Activated B cell treated with CpG ODN at 0.5 μM for 24 hours (primary cell): ENCODE measurements at regions of chr17 and their contacts with region 1.

Region 1: DNA sequence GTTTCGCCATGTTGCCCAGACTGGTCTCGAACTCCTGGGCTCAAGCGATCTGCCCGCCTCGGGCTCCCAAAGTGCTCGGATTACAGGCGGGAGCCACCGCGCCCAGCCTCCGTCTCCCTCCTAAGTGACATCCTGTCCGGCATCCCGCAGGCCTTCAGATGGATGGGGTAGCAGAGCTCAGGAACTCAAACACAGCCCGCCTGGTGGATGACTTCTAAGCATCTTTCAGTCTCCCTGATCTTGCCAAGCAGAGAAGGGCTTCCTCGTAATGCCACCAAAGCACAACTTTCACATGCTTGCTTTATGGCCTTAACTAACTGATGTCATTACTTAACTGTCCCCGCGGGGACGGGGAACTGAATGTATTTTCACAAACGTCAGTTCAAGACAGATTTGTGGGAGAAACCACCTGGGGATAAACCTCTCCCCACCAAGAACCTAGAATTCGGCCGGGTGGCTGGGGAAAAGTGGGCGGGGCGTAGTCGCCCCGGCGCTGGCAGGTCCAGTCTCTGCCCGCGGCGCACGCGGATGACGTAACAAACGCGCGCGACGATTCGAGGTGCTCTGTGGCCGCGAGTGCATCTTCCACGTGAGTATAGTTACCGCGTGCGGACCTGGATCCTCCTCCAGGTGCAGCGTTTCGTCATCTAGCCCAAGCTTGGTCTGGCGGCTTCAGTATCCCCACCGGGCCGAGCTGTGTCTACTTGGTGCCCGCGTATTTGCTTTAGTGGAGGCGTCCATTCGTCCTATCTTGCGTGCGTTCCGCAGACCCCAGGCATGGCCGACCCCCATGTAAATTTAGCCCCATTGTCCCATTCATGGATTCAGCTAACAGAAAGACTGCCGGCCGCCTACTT is at the start of gene PFAS:
- DNase-seq: peak; percentile 99
- ATAC-seq: peak; percentile 47
- H3K4me3 Mint-ChIP-seq: peak within 1 kb of the TSS; percentile 99
- H3K27ac Mint-ChIP-seq: peak within 1 kb of the TSS; percentile 99
- H3K4me1 Mint-ChIP-seq: peaks cover 43% of the 10 kb centered on the region
- H3K27me3 Mint-ChIP-seq: no peaks in the 10 kb centered on the region
- CTCF ChIP-seq: no peak
- total RNA-seq, gene PFAS: 121 and 126 TPM in 2 replicates

Region 2: GRCh38 chr17:7903154-7904103 is 345.6 kb before region 1 on chr17:
- CTCF ChIA-PET with region 1: no interaction called
- POLR2A ChIA-PET with region 1: no interaction called
- intact Hi-C with region 1: no loop called
- DNase-seq: no peak
- ATAC-seq: no peak
- H3K4me3 Mint-ChIP-seq: no peak overlapping the region
- H3K27ac Mint-ChIP-seq: no peak overlapping the region
- H3K4me1 Mint-ChIP-seq: no peaks in the 10 kb centered on the region
- H3K27me3 Mint-ChIP-seq: no peaks in the 10 kb centered on the region
- CTCF ChIP-seq: no peak

Region 3: GRCh38 chr17:8138672-8139371 is 110.2 kb before region 1 on chr17:
- CTCF ChIA-PET with region 1: interaction called, 3 read pairs
- POLR2A ChIA-PET with region 1: interaction called, 15 read pairs
- intact Hi-C with region 1: loop called (anchors 1 kb)
- DNase-seq: peak; percentile 94
- ATAC-seq: peak; percentile 94
- H3K4me3 Mint-ChIP-seq: no peak overlapping the region
- H3K27ac Mint-ChIP-seq: no peak overlapping the region
- H3K4me1 Mint-ChIP-seq: no peaks in the 10 kb centered on the region
- H3K27me3 Mint-ChIP-seq: no peaks in the 10 kb centered on the region
- CTCF ChIP-seq: peak; percentile 93

Region 4: GRCh38 chr17:8162233-8162996 is 86.6 kb before region 1 on chr17 and contains the start of gene VAMP2:
- CTCF ChIA-PET with region 1: interaction called, 4 read pairs
- POLR2A ChIA-PET with region 1: interaction called, 46 read pairs
- intact Hi-C with region 1: no loop called
- DNase-seq: peak; percentile 91
- ATAC-seq: peak; percentile 71
- H3K4me3 Mint-ChIP-seq: peak within 1 kb of the TSS; percentile 91
- H3K27ac Mint-ChIP-seq: peak within 1 kb of the TSS; percentile 95
- H3K4me1 Mint-ChIP-seq: peaks cover 56% of the 10 kb centered on the region
- H3K27me3 Mint-ChIP-seq: no peaks in the 10 kb centered on the region
- CTCF ChIP-seq: no peak
- total RNA-seq, gene VAMP2: 82.0 and 97.7 TPM in 2 replicates

Region 5: GRCh38 chr17:8204761-8205555 is 44.0 kb before region 1 on chr17:
- CTCF ChIA-PET with region 1: no interaction called
- POLR2A ChIA-PET with region 1: interaction called, 11 read pairs
- intact Hi-C with region 1: no loop called
- DNase-seq: no peak
- ATAC-seq: no peak
- H3K4me3 Mint-ChIP-seq: no peak overlapping the region
- H3K27ac Mint-ChIP-seq: no peak overlapping the region
- H3K4me1 Mint-ChIP-seq: peaks cover 8% of the 10 kb centered on the region
- H3K27me3 Mint-ChIP-seq: no peaks in the 10 kb centered on the region
- CTCF ChIP-seq: no peak

Region 6: DNA sequence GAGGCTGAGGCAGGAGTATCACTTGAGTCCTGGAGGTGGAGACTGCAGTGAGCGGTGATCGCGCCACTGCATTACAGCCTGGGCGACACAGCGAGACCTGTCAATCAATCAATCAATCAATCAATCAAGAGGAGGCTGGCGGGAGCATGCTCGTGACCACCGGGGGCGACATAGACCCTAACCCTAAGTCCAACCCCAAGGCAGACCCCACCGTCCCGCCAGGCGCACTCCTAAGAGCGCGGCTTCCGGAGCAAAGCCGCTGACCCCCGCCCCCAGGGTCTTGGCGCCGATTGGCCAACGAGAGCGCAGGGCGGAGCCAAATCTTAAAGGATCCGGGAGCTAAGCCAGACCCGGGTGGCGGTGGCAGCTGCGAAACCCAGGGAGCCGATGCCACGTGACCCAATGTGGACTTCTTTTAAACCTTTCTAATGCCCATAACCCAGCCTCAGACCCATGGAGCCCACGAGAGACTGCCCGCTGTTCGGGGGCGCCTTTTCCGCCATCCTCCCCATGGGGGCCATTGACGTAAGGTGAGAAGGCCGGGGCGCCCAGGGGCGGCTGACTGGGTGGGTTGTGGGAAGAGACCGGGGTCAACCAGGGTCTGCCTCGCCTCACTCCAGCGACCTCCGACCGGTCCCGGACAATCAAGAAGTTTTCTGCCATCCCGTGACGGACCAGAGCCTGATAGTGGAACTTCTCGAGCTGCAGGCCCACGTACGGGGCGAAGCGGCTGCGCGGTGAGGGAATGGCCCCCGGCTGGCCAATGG is 39.5 kb after region 1 on chr17 and contains the start of gene RANGRF:
- CTCF ChIA-PET with region 1: interaction called, 4 read pairs
- POLR2A ChIA-PET with region 1: interaction called, 108 read pairs
- intact Hi-C with region 1: loop called (anchors 1 kb)
- DNase-seq: peak; percentile 77
- ATAC-seq: peak; percentile 93
- H3K4me3 Mint-ChIP-seq: peak within 1 kb of the TSS; percentile 98
- H3K27ac Mint-ChIP-seq: peak within 1 kb of the TSS; percentile 97
- H3K4me1 Mint-ChIP-seq: peaks cover 51% of the 10 kb centered on the region
- H3K27me3 Mint-ChIP-seq: no peaks in the 10 kb centered on the region
- CTCF ChIP-seq: no peak
- total RNA-seq, gene RANGRF: 50.1 and 50.9 TPM in 2 replicates

Region 7: DNA sequence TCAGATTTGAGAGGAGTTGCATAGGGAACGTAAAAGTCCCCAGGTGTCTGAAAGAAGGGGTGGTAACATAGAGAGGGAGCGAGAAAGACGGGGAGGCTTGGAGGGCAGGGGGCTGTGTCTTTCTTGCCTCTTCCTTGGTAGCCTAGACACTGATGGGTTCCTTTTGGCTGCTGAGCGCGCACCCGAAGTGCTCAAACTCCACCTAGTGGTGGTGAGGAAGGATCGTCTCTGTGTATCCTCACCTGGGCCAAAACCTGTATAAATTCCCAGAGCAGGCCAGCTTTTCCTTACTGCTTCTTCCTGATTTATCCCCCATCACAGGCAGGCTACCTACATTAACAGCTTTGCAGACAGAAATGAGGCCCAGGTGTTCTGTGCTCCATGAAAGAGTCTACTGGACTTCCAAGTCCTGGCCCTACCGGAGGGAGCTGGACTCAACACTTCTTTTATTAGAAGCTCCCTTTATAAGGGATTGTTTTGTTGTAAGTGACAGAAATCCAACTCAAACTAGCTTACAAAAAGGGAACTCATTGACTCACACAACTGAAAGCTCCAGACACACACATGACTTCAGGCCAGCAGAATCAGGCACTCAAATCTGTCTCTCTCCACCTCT is 51.8 kb after region 1 on chr17:
- CTCF ChIA-PET with region 1: interaction called, 8 read pairs
- POLR2A ChIA-PET with region 1: interaction called, 108 read pairs
- intact Hi-C with region 1: loop called (anchors 1 kb)
- DNase-seq: peak; percentile 30
- ATAC-seq: peak; percentile 97
- H3K4me3 Mint-ChIP-seq: no peak overlapping the region
- H3K27ac Mint-ChIP-seq: peak overlapping the region; percentile 46
- H3K4me1 Mint-ChIP-seq: peaks cover 8% of the 10 kb centered on the region
- H3K27me3 Mint-ChIP-seq: no peaks in the 10 kb centered on the region
- CTCF ChIP-seq: no peak

Region 8: DNA sequence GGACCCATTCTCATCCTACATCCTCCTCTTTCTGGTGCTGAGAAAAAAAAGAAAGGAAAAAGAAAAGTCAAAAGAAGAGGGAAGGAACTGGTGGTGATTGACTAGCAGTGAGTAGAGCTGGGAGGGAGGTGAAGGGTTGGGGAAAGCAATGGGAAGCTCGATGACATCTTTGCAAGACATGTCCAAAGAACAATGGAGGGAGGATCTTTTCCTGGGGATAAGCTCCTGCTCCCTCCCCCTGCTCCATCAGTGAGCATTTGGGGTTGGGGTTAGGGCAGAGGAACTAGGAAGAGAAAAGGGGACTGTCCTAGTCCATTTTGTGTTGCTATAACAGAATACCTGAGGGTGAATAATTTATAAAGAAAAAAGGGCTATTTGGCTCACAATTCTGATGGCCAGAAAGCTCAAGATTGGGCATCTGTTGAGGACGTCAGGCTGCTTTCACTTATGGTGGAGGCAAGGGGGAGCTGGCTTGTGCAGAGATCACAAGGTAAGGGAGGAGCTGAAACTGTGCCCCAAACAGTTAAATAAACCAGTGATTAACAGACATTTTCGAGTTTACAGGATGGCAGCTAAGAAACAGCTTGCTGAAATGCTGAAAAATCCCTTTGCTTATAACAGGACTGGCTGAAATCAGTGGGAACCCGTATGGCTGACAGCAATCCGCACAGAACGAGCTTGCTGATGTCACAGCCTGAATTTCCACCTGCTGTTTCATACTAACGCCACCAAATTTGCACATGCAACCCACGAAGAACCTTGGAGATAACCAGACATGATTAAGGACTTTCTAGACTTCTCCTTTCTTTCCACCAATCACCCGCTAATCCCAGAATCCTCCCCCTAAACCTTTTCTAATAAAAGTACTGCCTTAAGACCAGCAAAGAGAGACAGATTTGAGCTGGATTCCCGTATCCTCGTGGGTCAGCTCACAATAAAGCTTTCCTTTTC is 89.1 kb after region 1 on chr17:
- CTCF ChIA-PET with region 1: no interaction called
- POLR2A ChIA-PET with region 1: no interaction called
- intact Hi-C with region 1: no loop called
- DNase-seq: no peak
- ATAC-seq: no peak
- H3K4me3 Mint-ChIP-seq: no peak overlapping the region
- H3K27ac Mint-ChIP-seq: no peak overlapping the region
- H3K4me1 Mint-ChIP-seq: peaks cover 8% of the 10 kb centered on the region
- H3K27me3 Mint-ChIP-seq: peaks cover 3% of the 10 kb centered on the region
- CTCF ChIP-seq: no peak

Region 9: DNA sequence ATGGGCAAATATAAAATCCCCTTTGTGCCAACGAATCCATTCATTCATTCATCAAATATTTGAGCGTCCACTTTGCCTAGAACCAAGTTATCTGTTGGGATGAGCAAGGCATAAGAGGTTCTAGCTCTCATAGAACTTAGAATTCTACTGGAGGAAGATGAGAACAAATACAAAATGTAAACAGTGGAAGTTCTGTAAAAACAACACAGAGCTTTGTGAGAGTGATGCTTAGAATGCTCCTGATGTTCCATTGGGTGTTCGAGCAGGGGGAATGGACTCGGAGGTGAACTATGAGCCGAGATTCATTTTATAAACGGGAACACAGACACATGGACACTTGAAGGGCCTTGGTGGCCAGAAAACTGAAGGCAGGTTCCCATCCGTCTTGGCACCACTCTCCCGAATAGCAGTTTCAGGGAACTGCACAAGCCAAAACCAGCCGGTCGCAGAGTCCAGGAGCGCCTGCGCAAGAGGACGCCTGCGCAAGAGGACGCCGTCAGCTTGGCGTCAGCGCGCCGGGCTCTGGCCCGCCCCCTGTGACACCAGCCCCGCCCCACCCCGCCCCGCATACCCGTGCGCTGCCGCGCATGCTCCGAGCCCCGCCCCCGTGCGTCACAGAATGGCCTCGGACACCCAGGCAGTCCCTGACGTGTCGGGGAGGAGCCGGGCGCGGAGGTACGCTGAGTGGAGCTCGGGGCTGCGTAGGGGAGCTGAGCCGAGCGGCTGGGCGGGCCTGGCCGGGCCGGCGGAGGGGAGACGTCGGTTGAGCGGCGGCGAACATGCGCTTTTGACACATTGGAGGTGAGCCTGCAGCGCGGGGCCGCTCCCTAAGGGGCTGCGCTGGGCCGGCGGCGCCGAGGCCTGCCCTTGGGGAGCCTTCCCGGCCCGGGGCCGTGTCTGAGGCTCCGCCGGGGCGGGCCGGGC is 186.5 kb after region 1 on chr17 and contains the start of gene NDEL1:
- CTCF ChIA-PET with region 1: no interaction called
- POLR2A ChIA-PET with region 1: no interaction called
- intact Hi-C with region 1: loop called (anchors 2 kb)
- DNase-seq: peak; percentile 97
- ATAC-seq: peak; percentile 94
- H3K4me3 Mint-ChIP-seq: peak within 1 kb of the TSS; percentile 91
- H3K27ac Mint-ChIP-seq: peak within 1 kb of the TSS; percentile 93
- H3K4me1 Mint-ChIP-seq: peaks cover 32% of the 10 kb centered on the region
- H3K27me3 Mint-ChIP-seq: no peaks in the 10 kb centered on the region
- CTCF ChIP-seq: no peak
- total RNA-seq, gene NDEL1: 64.6 and 82.6 TPM in 2 replicates